ENCODE measurements at regions of chr5 and their contacts with region 1.

Region 1: DNA sequence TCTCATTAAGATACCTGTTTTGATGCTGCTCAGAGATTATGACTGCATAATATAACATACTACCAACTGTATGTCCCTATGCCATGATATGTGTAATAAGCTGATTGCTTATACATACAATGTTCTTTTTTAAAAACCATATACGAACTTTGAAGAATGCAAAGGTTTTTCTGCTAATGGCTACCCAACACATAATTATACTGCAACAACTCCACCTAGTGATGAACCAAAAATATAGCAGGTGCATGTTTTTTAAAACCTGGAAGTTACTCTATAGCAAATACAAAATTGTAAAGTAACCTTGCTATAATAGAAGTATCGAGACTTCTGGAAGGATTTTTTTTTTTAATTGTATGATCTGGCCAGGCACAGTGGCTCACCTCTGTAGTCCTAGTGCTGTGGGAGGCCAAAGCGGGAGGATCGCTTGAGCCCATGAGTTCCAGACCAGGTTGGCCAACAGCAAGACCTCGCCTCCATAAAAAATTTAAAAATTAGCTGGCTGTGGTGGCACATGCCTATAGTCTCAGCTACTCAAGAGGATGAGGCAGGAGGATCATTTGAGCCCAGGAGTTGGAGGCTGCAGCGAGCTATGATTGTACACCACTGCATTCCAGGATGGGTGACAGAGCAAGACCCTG is 49.1 kb downstream of the HOMER1 start:
- DNase-seq: no peak
- ATAC-seq: peak; percentile 75
- H3K4me3 ChIP-seq: no peak overlapping the region
- H3K27ac ChIP-seq: no peak overlapping the region
- H3K4me1 ChIP-seq: no peaks in the 10 kb centered on the region
- H3K27me3 ChIP-seq: no peaks in the 10 kb centered on the region
- CTCF ChIP-seq: peak; percentile 52 to 72 (median 62); a peak in 5 of 6 replicates
- EP300 ChIP-seq: no peak
- POLR2A ChIP-seq: no peak
- RAD21 ChIP-seq: peak; percentile 87

Region 2: DNA sequence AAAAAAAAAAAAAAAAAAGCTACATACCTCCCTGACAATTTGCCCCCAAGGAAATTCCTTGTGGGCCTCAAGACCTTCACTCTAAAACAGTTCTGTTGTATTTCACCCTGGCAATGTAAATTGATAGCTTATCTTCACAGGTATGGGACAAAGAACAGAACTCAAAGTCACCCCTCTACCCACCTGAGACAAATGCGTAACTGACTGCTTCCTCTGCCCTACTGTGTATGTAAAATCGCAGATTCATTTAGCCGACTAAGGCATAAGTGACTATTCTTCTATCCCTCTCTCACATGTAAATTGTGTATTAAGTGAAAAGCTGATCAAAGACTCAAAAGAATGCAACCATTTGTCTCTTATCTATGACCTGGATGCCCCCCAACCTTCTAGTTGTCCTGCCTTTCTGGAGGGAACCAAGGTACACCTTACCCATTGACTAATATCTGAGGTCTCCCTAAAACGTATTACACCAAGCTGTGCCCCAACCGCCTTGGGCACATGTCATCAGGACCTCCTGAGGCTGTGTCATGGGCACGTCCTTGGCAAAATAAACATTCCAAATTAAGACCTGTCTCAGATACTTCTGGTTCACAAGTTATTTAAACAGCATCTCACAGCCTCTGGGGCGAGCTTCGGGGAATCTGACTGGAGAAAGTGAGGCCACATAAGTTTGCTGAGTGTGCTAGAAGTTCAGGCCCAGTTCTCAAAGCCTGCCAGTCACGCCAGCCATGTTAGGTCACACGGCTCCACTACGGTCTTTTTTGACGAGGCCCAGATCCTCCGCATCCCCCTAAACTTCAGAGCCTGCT is 1689.6 kb before region 1 on chr5:
- CTCF ChIA-PET with region 1: no interaction called
- POLR2A ChIA-PET with region 1: no interaction called
- RAD21 ChIA-PET with region 1: no interaction called
- SMC1A ChIA-PET with region 1: no interaction called
- in situ Hi-C with region 1: no loop called
- intact Hi-C with region 1: no loop called
- DNase-seq: no peak
- ATAC-seq: peak; percentile 9
- H3K4me3 ChIP-seq: peak overlapping the region; percentile 89
- H3K27ac ChIP-seq: peak overlapping the region; percentile 95
- H3K4me1 ChIP-seq: peaks cover 4% of the 10 kb centered on the region; the same call in 1 of the 2 replicates
- H3K27me3 ChIP-seq: no peaks in the 10 kb centered on the region
- CTCF ChIP-seq: no peak
- EP300 ChIP-seq: no peak
- POLR2A ChIP-seq: no peak
- RAD21 ChIP-seq: no peak

Region 3: GRCh38 chr5:79241535-79241979 is 223.3 kb before region 1 on chr5:
- CTCF ChIA-PET with region 1: no interaction called
- POLR2A ChIA-PET with region 1: no interaction called
- RAD21 ChIA-PET with region 1: interaction called, 3 read pairs
- SMC1A ChIA-PET with region 1: no interaction called
- in situ Hi-C with region 1: no loop called
- intact Hi-C with region 1: loop called (anchors 5 kb)
- DNase-seq: no peak
- ATAC-seq: peak; percentile 24
- H3K4me3 ChIP-seq: peak overlapping the region; percentile 9; the same call in 1 of the 2 replicates
- H3K27ac ChIP-seq: peak overlapping the region; percentile 4; the same call in 1 of the 2 replicates
- H3K4me1 ChIP-seq: peaks cover 8% of the 10 kb centered on the region
- H3K27me3 ChIP-seq: no peaks in the 10 kb centered on the region
- CTCF ChIP-seq: no peak
- EP300 ChIP-seq: no peak
- POLR2A ChIP-seq: no peak
- RAD21 ChIP-seq: no peak

Region 4: GRCh38 chr5:79255786-79256557 is 208.8 kb before region 1 on chr5:
- CTCF ChIA-PET with region 1: interaction called, 23 read pairs
- POLR2A ChIA-PET with region 1: no interaction called
- RAD21 ChIA-PET with region 1: interaction called, 5 read pairs
- SMC1A ChIA-PET with region 1: interaction called, 7 read pairs
- in situ Hi-C with region 1: no loop called
- intact Hi-C with region 1: no loop called
- DNase-seq: no peak
- ATAC-seq: peak; percentile 90
- H3K4me3 ChIP-seq: no peak overlapping the region
- H3K27ac ChIP-seq: no peak overlapping the region
- H3K4me1 ChIP-seq: peaks cover 17% of the 10 kb centered on the region
- H3K27me3 ChIP-seq: no peaks in the 10 kb centered on the region
- CTCF ChIP-seq: peak; percentile 40 to 57 (median 56)
- EP300 ChIP-seq: no peak
- POLR2A ChIP-seq: no peak
- RAD21 ChIP-seq: 0 out of 2 replicates have a peak, but pooled peaks have one; percentile 23

Region 5: GRCh38 chr5:79448336-79448735 is 16.5 kb before region 1 on chr5:
- CTCF ChIA-PET with region 1: interaction called, 11 read pairs
- POLR2A ChIA-PET with region 1: no interaction called
- RAD21 ChIA-PET with region 1: interaction called, 8 read pairs
- SMC1A ChIA-PET with region 1: interaction called, 7 read pairs
- in situ Hi-C with region 1: no loop called
- intact Hi-C with region 1: no loop called
- DNase-seq: no peak
- ATAC-seq: no peak
- H3K4me3 ChIP-seq: no peak overlapping the region
- H3K27ac ChIP-seq: no peak overlapping the region
- H3K4me1 ChIP-seq: no peaks in the 10 kb centered on the region
- H3K27me3 ChIP-seq: no peaks in the 10 kb centered on the region
- CTCF ChIP-seq: no peak
- EP300 ChIP-seq: no peak
- POLR2A ChIP-seq: no peak
- RAD21 ChIP-seq: no peak

Region 6: DNA sequence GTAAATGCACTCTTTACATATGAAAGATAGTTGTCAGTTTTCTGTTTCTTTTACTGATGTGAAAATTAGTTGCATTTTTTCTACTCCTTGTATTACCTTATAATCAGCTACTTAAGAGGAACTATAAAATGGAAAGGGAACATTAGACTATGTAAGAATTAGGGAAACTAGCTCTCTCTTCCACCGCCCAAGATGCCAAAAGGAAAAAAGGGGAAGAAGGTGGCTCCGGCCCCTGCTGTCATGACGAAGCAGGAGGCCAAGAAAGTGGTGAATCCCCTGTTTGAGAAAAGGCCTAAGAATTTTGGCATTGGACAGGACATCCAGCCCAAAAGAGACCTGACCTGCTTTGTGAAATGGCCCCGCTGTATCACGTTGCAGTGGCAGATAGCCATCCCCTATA is 64.3 kb after region 1 on chr5:
- CTCF ChIA-PET with region 1: no interaction called
- POLR2A ChIA-PET with region 1: no interaction called
- RAD21 ChIA-PET with region 1: no interaction called
- SMC1A ChIA-PET with region 1: no interaction called
- in situ Hi-C with region 1: no loop called
- intact Hi-C with region 1: no loop called
- DNase-seq: no peak
- ATAC-seq: no peak
- H3K4me3 ChIP-seq: no peak overlapping the region
- H3K27ac ChIP-seq: no peak overlapping the region
- H3K4me1 ChIP-seq: no peaks in the 10 kb centered on the region
- H3K27me3 ChIP-seq: no peaks in the 10 kb centered on the region
- CTCF ChIP-seq: no peak
- EP300 ChIP-seq: no peak
- POLR2A ChIP-seq: no peak
- RAD21 ChIP-seq: no peak

Region 7: GRCh38 chr5:79552984-79553383 is 88.2 kb after region 1 on chr5:
- CTCF ChIA-PET with region 1: no interaction called
- POLR2A ChIA-PET with region 1: no interaction called
- RAD21 ChIA-PET with region 1: no interaction called
- SMC1A ChIA-PET with region 1: no interaction called
- in situ Hi-C with region 1: no loop called
- intact Hi-C with region 1: no loop called
- DNase-seq: no peak
- ATAC-seq: no peak
- H3K4me3 ChIP-seq: no peak overlapping the region
- H3K27ac ChIP-seq: no peak overlapping the region
- H3K4me1 ChIP-seq: no peaks in the 10 kb centered on the region
- H3K27me3 ChIP-seq: no peaks in the 10 kb centered on the region
- CTCF ChIP-seq: no peak
- EP300 ChIP-seq: no peak
- POLR2A ChIP-seq: no peak
- RAD21 ChIP-seq: no peak

Region 8: DNA sequence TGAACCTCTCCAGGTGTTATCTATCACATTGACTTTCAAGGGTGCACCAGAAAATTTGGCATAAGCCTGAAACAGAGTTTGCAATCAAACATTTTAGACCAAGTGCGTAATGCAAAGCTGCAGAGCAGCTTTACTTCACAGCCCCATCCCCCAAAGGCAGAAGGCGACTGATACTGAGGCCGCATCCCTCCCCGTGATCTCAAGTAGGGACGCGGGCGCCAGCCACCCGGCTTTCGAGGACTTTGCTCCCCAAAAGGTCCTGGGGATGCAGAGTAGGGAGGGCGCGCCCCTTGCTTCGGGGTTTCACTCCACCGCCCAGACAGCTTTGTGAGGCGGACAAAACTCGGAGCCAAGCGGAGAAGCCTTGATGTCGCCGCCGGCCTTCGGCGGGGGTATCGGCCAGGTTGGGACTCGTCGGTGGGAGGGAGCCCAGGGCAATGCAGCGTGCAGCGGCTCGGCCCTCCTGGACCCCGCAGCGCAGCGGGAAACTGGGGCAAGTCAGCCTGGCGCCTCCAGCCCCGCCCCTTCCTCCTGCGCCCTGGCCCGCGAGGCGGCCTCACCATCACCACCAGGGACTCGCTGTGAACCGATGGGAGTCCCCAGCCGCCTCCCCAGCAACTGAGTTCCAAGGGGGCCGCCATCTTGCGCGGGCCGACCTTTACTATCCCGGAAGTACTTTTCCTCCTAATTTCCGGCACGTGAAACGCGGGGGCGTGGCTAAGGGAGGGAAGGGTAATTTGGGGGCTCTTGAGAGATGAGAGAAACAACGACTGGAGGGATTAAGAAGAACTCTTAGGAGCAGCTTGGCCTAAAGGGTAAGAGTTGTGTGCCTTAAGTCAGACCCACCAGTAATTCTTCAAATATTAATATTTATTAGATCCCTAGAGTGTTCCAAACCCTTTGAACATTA is 526.0 kb after region 1 on chr5 and contains the start of gene MTX3:
- CTCF ChIA-PET with region 1: no interaction called
- POLR2A ChIA-PET with region 1: no interaction called
- RAD21 ChIA-PET with region 1: no interaction called
- SMC1A ChIA-PET with region 1: no interaction called
- in situ Hi-C with region 1: no loop called
- intact Hi-C with region 1: no loop called
- DNase-seq: peak; percentile 57
- ATAC-seq: peak; percentile 96
- H3K4me3 ChIP-seq: peak within 1 kb of the TSS; percentile 86
- H3K27ac ChIP-seq: peak within 1 kb of the TSS; percentile 86
- H3K4me1 ChIP-seq: peaks cover 4% of the 10 kb centered on the region; the same call in 1 of the 2 replicates
- H3K27me3 ChIP-seq: no peaks in the 10 kb centered on the region
- CTCF ChIP-seq: no peak
- EP300 ChIP-seq: 0 out of 4 replicates have a peak, but pooled peaks of 1 of the 2 experiments have one; percentile 26
- POLR2A ChIP-seq: peak; percentile 93
- RAD21 ChIP-seq: no peak
- polyA plus RNA-seq, gene MTX3: 1.8 to 3.1 TPM

Measured in GM12878 (cell line).